ENCODE measurements at regions of chr10 and their contacts with region 1.

Region 1: DNA sequence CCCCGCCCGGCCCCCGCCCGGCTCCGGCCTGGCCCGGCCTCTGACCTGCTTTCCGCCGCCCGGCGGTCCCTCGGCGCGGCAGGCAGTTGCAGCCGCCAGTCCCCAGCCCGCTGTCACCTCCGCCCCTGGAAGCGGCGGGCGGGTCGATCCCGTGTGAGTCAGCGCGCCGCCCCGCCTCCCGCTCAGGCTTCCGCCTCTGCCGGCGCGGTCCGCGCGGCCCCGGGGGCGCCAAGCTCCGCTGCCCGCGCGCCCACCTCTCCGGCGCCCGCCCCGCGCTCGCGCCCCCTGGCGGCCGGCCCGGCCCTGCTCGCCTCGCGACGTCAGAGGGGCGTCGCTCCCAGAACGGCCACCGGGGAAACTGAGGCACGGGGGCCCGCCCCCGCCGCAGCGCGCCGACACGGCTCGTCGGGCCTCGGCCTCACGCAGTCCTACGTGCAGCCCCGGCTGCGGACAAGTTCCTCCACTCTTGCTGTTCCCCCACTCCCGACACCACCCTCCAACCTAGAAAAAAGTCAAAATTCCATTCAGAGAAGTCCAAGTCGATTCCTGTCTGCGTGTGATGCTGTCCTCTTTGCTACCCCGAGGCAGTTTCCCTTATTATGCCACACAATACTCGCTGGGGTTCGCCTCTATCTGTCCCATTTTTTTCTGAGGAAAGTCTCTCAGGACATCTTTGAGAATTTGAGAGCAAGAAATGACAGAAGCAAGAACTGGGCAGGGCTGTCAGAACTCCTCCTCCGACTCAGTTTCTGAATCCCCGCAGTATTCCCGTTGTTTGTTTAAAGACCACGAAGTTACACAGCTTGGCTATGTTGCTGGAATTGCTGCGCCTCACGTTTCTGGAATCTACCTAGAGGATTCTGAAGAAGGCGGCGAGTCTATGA is at the start of gene DNMBP:
- DNase-seq: peak; percentile 75 to 87
- H3K4me3 ChIP-seq: peak within 1 kb of the TSS; percentile 73
- H3K4me1 ChIP-seq: peaks cover 34% of the 10 kb centered on the region
- H3K27me3 ChIP-seq: no peaks in the 10 kb centered on the region

Region 2: GRCh38 chr10:99598781-99599509 is 411.1 kb before region 1 on chr10:
- in situ Hi-C with region 1: no loop called
- DNase-seq: no peak
- H3K4me3 ChIP-seq: no peak overlapping the region
- H3K4me1 ChIP-seq: no peaks in the 10 kb centered on the region
- H3K27me3 ChIP-seq: no peaks in the 10 kb centered on the region

Region 3: DNA sequence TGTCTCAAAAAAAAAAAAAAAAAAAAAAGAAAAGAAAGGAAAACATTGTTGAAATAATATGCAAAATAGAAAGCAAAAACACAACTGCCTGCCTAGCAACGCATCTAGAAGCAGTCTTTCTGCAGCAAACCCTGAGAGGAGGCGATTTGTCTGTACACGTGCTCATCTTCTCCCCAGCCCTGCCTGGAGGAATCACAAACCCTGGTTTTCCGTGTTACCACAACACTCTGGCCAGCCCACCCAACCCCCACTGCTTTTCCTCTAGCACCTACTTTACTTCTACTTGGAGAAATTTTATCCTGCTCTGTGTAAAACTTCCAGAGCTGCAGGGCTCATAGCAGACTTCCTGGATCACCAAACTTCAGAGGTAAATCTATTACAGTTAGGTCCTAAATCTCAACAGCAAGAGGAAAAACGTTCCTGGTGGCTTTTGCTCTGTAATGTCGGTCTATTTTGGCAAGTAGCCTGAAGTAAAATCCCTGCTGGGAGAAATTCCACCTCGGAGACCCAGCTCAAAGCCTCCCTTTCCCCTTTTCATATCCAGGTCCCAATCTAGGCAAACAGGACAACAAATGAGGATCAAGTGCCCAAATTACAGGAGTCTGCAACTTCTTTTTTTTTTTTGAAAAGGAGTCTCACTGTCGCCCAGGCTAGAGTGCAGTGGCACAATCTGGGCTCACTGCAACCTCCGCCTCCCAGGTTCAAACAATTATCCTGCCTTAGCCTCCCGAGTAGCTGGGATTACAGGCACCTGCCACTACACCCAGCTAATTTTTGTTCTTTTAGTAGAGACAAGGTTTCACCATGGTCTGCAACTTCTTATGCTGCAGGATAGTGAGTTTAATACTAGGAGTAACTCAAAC is 91.8 kb before region 1 on chr10:
- in situ Hi-C with region 1: loop called (anchors 10 kb)
- DNase-seq: peak; percentile 94 to 95
- H3K4me3 ChIP-seq: peak overlapping the region; percentile 29
- H3K4me1 ChIP-seq: peaks cover 21% of the 10 kb centered on the region
- H3K27me3 ChIP-seq: no peaks in the 10 kb centered on the region